ENCODE measurements at regions of chr13 and their contacts with region 1.

Region 1: GRCh38 chr13:27980280-27980998 is 8.1 kb downstream of the URAD start:
- H3K4me3 ChIP-seq: no peak overlapping the region
- H3K27ac ChIP-seq: no peak overlapping the region
- H3K4me1 ChIP-seq: no peaks in the 10 kb centered on the region
- CTCF ChIP-seq: no peak

Region 2: DNA sequence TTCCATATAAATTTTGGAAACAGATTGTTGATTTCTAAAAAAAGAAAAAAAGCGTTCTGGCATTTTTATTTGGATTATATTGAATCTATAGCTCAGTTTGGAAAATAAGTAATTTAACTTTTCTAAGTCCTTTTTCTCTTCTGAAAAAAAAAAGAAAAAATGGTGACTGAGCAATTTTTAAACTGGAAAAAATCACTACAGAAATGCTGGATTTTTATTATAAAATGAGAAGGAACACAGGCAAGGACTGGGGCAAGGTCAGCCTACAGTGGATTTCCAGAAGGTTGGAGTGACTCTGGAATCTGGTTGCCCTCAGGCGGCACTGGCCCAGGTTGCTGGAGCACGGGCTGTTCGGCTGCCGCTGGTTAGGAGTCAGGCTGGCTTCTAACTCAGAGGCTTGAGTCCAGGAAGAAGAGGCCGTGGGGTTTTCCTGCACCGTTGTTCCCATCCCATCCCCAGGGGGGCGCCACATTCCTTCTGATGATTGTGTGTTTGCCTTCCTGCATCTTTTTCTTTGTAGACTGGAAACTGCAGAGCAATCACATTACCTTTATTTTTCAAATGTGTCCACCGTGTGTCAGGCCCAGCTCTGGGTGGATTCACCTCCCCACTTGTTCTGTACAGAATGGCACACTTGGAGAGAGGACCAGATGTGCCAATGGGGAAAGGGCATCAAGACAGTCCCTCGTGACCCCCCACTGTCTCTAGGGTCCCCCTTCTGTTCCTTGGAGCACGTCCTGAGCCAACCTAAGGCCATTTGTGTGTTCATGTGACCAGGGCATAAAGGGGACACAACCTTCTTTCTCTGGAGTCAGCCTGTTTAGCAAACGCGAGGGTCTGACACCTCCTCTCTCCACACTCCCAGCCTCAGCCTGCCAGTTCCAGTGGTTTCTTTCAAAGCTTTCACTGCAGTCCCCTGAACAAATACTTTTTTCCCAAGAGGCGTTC is 600.5 kb before region 1 on chr13:
- CTCF ChIA-PET with region 1: interaction called, 23 read pairs
- POLR2A ChIA-PET with region 1: no interaction called
- H3K4me3 ChIP-seq: no peak overlapping the region
- H3K27ac ChIP-seq: no peak overlapping the region
- H3K4me1 ChIP-seq: no peaks in the 10 kb centered on the region; the same call in 1 of the 2 replicates
- CTCF ChIP-seq: peak; percentile 37; the same call in 1 of the 2 replicates

Region 3: DNA sequence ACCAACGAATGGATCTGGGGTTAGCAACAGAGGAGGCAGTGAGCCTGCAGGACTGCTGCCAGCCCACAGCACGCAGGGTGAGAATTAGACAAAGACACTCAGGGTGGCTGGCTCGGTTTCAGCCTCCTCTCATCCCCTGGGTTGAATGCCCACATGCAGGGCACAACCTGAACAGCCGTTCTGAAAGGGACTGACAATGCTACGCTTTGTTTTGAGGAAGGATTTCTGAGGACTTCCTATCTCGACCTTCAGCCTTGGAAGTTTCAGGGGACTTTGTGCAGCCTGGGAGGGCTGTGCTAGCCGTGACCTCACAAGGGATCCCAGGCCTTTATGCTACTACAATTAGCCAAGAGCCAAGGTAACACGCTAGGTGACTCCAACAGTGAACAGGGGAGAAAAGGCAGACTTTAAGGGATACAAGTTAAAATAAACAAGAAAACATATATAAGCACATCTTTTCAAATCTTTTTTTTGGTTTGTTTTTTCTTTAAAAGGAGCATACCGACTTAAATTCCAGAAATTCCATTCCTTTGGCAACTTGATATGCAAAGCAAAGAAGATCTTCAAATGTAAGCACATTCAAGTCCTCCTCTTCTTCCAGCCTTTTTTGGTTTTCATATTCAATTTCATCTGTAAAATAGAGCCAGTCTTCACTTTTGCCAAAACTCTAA is 42.5 kb after region 1 on chr13:
- CTCF ChIA-PET with region 1: no interaction called
- POLR2A ChIA-PET with region 1: no interaction called
- H3K4me3 ChIP-seq: no peak overlapping the region
- H3K27ac ChIP-seq: no peak overlapping the region
- H3K4me1 ChIP-seq: no peaks in the 10 kb centered on the region
- CTCF ChIP-seq: no peak